ENCODE measurements at regions of chr2 and their contacts with region 1.

Region 1: DNA sequence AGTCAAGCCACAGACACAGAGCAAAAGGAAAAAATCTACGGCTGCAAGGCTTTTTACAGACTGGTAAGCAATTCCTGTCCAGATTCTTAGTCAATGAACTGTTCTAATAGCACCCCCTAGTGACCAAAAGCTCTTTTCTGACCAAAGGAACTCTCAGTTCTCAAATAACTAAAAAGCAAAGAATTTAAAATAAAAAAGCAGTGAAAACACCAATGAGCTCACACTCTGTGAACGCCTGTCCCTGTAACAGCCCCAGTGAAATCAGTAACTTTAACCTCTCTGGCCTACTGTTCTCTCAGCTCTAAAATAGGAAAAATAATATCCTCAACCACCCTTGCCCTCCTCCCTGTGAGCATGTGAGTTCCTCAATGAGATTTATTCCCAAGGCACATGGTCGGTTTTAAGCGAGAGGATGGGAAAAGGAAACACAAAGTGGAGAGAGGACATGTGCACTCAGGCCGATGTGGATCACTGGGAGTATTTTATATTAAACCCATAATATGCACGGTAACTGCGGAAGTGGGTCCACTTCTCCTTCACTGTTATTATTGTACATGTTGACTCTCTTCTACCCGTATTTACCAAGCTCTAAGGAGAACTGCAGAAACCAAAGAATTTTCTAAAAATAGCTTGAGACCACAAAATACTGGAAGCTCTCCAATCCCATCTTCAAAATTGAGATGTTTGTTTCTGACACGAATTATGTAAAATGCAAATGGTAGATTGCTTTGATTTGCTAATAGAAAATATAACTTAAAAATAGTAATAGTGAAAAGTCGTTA is 128.5 kb downstream of the STK39 start:
- DNase-seq: peak; percentile 48
- H3K4me3 ChIP-seq: no peak overlapping the region
- H3K27ac ChIP-seq: no peak overlapping the region
- H3K4me1 ChIP-seq: no peaks in the 10 kb centered on the region
- H3K27me3 ChIP-seq: no peaks in the 10 kb centered on the region
- CTCF ChIP-seq: peak; percentile 46 to 79 (median 71)
- POLR2A ChIP-seq: no peak

Region 2: GRCh38 chr2:166539340-166540162 is 1579.4 kb before region 1 on chr2:
- intact Hi-C with region 1: loop called (anchors 5 kb)
- DNase-seq: peak; percentile 6
- H3K4me3 ChIP-seq: no peak overlapping the region
- H3K27ac ChIP-seq: no peak overlapping the region
- H3K4me1 ChIP-seq: no peaks in the 10 kb centered on the region
- H3K27me3 ChIP-seq: no peaks in the 10 kb centered on the region
- CTCF ChIP-seq: peak; percentile 27 to 61 (median 56)
- POLR2A ChIP-seq: no peak

Region 3: DNA sequence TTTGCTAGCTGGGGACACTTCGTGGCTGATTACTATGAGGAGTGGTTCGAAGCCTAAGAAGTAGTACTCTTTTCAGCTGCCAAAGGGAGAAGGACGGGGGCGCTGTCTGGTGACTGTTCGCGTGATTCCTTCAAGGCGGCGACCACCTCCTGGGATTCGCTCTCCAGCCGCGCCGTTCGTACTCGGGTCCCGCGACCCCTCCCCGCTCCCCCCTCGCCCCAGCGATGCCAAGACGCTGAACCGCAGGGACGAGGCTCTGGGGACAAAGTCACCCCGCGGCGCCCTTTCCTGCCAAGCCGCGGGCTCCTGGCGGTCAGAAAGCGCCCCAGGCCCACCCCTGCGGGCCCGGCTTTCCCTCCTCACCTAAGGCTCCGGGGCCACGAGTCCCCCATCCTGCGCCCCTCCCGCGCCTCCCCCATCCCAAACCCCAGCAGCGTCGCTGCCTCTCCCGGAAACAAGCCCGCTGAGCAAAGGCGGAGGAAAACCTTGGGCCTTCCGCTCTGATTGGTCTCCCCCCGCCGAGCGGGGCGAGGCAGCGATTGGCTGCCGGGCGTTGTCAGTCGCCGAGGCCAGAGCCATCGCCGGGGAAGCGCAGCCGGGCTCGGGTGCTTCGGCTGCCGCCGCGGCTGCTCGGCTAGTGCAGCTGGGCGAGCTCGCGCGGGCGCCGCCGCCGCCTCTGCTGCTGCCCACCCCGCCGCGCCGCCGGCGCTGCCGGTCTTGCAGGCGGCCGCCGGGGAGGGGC is 826.3 kb before region 1 on chr2:
- intact Hi-C with region 1: loop called (anchors 5 kb)
- DNase-seq: peak; percentile 75
- H3K4me3 ChIP-seq: peak within 1 kb of the TSS; percentile 50 to 51
- H3K27ac ChIP-seq: peak within 1 kb of the TSS; percentile 75 to 76
- H3K4me1 ChIP-seq: no peaks in the 10 kb centered on the region
- H3K27me3 ChIP-seq: peaks cover 5% of the 10 kb centered on the region
- CTCF ChIP-seq: peak in 1 of 4 experiments; percentile 5
- POLR2A ChIP-seq: no peak

Region 4: GRCh38 chr2:167964650-167965413 is 154.1 kb before region 1 on chr2:
- intact Hi-C with region 1: loop called (anchors 2 kb)
- DNase-seq: no peak
- H3K4me3 ChIP-seq: no peak overlapping the region
- H3K27ac ChIP-seq: no peak overlapping the region
- H3K4me1 ChIP-seq: no peaks in the 10 kb centered on the region
- H3K27me3 ChIP-seq: no peaks in the 10 kb centered on the region
- CTCF ChIP-seq: peak in 2 of 4 experiments; percentile 18 to 24
- POLR2A ChIP-seq: no peak

Region 5: DNA sequence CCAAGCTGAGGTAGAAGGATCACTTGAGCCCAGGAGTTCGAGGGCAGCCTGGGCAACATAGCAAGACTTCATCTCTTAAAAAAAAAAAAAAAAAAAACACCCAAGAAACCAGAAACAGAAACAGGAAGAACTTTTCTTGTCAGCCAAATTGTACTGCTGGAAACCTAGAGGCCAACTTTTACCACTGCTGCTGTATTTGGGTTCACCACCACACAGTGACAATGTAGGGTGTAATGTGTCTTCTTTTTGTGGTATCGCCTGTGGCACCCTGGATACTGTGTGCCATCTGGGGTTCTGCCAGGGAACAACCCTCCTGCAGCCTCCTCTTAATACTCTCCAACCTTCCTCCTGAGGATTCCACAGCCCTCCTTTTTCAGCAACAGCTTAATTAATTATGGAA is 55.8 kb after region 1 on chr2:
- intact Hi-C with region 1: no loop called
- DNase-seq: no peak
- H3K4me3 ChIP-seq: no peak overlapping the region
- H3K27ac ChIP-seq: no peak overlapping the region
- H3K4me1 ChIP-seq: peaks cover 3% of the 10 kb centered on the region
- H3K27me3 ChIP-seq: no peaks in the 10 kb centered on the region
- CTCF ChIP-seq: no peak
- POLR2A ChIP-seq: no peak

Region 6: GRCh38 chr2:168254158-168254935 is 135.4 kb after region 1 on chr2:
- intact Hi-C with region 1: no loop called
- DNase-seq: no peak
- H3K4me3 ChIP-seq: no peak overlapping the region
- H3K27ac ChIP-seq: no peak overlapping the region
- H3K4me1 ChIP-seq: no peaks in the 10 kb centered on the region
- H3K27me3 ChIP-seq: no peaks in the 10 kb centered on the region
- CTCF ChIP-seq: no peak
- POLR2A ChIP-seq: no peak

Region 7: DNA sequence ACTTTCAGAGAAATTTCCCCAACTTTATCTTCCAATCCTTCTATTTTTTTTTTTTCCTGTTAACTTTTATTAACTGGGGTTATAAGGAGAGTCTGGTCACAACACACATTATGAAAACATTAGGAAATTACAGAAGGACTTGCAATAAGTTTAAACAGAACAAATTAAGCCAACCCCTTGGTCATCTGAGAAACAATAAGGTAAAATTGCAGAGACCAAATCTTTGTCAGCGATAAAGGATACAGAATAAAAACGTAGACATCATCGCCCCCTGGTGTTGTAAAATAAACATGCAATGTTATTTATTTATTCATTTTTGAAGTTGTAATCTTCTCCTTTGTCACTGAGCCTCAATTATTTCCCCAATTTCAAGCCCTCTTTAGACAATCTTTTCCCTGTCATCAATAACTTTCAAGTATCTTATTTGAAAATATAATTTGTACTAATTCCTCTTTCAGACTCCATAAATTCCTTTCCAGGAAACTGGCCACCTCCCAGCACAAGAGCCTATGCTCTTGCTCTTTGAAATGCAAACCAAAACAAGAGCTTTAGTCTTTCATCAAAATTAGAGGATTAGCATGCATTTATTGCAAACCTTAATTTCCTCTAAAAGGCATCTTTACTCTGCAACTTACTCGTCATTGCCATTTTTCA is 801.7 kb after region 1 on chr2:
- intact Hi-C with region 1: loop called (anchors 10 kb)
- DNase-seq: no peak
- H3K4me3 ChIP-seq: no peak overlapping the region
- H3K27ac ChIP-seq: no peak overlapping the region
- H3K4me1 ChIP-seq: no peaks in the 10 kb centered on the region
- H3K27me3 ChIP-seq: no peaks in the 10 kb centered on the region
- CTCF ChIP-seq: peak; percentile 31 to 71 (median 66)
- POLR2A ChIP-seq: no peak